Aorta (tissue), 5 donors: ENCODE measurements at regions of chr3 and their contacts with region 1.

Region 1: DNA sequence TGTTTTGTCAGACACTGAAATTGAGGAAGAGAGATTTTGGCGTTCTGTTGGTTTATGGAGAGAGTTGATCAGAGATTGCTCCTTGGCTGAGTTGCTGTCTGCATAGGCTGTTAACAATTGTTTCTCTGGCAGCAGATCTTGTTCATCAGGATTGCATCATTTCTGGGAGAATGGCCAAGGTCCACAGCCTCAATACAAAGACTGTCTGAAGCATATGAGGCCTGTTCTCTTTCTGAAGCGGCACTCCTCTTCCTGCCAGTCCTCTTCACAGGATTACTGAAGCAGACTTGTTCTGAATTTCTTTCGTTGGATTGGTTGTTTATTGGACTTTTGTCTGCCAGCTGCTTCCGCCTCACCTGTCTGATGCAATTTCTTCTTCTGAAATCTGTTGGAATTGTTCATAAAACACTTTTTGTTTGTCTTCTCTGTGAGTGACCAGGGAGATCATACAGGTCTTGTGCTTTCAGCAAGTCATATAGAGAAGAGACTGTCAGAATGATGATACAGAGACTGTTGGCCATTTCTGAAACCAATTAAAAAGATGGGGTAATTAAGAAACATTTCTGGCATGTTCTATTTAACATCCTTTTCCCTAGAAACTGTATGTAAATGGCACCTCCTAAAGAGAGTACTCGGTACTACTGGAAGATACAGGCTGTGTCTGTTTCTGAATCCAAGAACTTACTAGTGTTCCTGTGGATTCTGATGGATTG is 25.5 kb downstream of the SETD5 start:
- DNase-seq: peak in 1 of 2 donors; percentile 74
- ATAC-seq: peak; percentile 93
- H3K4me3 ChIP-seq: no peak overlapping the region
- H3K27ac ChIP-seq: peak overlapping the region; percentile 19 to 86
- H3K4me1 ChIP-seq: peaks cover 1 to 3% of the 10 kb centered on the region in 2 donors
- H3K27me3 ChIP-seq: no peaks in the 10 kb centered on the region

Region 2: DNA sequence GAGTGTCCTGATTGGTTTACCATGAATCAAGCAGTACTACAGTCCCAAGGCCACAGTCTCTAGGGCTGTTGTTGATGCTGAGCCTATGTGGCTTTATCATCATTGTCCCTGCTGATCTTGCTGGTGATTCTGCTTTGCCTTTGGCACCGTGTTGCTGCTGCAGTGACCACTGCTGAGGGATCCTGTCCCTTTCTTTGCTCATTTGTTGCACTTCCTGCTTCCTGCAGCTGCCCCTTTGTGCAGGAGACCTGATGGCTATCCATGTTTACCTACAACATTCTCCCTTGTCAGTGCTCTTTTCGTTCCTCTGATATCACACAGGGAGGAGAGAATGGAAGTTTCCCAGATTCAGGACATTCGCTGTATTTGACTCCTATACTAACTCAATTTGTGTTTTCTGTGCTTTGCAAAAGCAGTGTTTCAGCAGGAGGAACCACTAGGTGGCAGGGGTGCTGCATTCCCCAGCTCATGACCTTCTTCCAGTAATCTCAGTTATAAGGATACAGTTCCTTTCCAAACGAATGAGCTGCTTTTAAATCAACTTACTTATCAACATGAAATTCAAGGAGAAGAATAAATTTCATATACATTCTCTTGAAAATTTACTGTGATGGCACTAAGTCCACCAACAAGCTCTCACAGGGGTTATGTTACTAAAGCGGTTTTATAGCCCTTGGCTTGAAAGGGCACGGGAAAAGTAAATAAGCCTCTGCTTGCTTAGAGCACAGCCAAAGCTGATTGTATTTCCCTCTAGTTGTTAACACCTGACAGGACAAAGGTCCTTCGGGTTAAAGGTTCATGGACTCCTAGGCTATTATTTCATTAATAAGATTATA is 69.7 kb before region 1 on chr3:
- intact Hi-C with region 1: loop called in 1 of 2 experiments (anchors 5 kb)
- DNase-seq: peak; percentile 71 to 82
- ATAC-seq: peak; percentile 89
- H3K4me3 ChIP-seq: no peak overlapping the region
- H3K27ac ChIP-seq: no peak overlapping the region
- H3K4me1 ChIP-seq: peaks cover 0 to 1% of the 10 kb centered on the region in 2 donors
- H3K27me3 ChIP-seq: no peaks in the 10 kb centered on the region

Region 3: GRCh38 chr3:9362731-9363530 is 59.9 kb before region 1 on chr3 and contains the start of gene THUMPD3:
- intact Hi-C with region 1: loop called in 1 of 2 experiments (anchors 10 kb)
- DNase-seq: peak; percentile 95 to 98
- ATAC-seq: peak; percentile 97
- H3K4me3 ChIP-seq: peak within 1 kb of the TSS; percentile 44 to 91
- H3K27ac ChIP-seq: peak within 1 kb of the TSS; percentile 62 to 69
- H3K4me1 ChIP-seq: no peaks in the 10 kb centered on the region
- H3K27me3 ChIP-seq: no peaks in the 10 kb centered on the region
- total RNA-seq, gene THUMPD3: 23.8 to 26.2 TPM

Region 4: DNA sequence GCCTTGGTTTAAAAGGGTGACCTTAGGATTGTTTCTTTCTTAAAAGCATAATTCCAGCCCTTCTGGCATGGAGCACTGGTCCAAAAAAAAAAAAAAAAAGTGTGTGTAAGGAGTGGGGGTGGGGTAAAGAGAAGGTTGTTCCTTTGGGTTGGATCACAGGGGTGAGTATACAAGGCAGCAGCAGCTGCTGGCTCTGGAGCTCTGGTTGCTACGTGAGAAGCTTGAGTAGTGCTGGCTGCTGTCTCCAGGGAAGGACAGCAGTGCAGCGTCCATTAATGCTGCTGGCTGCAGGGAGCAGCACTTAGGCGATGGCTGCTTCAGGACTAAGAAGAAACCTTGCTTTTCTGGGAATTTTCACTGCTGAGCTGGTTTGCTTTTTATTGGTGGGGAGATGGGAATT is 23.1 kb before region 1 on chr3:
- intact Hi-C with region 1: loop called in 1 of 2 experiments (anchors 2 kb)
- DNase-seq: peak; percentile 81 to 83
- ATAC-seq: peak; percentile 53
- H3K4me3 ChIP-seq: peak overlapping the region in 1 of 2 donors; percentile 36
- H3K27ac ChIP-seq: no peak overlapping the region
- H3K4me1 ChIP-seq: peaks cover 0 to 6% of the 10 kb centered on the region in 2 donors
- H3K27me3 ChIP-seq: no peaks in the 10 kb centered on the region